ENCODE measurements at regions of chr5 and their contacts with region 1.

Region 1: DNA sequence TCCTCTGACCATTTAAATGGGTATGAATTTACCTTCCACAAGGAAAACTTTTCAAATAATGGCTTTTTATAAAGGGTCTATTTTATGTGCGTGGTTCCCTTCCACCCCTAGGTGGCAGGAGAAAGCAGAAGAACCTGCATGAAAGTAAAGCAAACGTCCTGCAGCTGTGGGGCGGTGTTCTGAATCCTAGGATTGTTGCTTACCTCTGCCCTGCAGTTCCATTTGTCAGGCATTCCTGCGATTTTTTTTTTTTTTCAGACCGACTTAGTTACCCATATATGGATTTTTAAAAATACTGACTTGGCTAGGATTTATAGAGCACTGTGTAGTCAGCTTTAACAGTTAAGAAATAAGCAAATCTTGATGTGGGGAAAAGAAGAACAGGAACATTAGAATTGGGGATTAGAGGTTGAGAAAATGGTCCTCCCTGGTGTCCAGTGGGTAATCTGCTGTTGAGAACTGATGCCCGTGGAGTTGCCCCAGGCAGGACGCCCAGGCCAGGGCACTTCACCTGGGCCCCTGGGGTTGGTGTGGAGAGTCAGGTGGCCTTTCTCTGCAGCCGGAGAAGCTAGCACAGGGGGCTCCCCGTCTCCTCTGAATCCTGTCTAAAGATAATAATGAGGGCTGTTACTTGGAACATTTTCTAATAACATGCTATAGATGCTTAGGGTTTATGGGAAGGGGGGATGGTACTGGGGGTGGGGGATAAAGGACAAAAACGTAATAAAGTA is 30.4 kb upstream of the LTC4S start:
- DNase-seq: peak; percentile 38
- ATAC-seq: peak; percentile 88
- H3K4me3 ChIP-seq: no peak overlapping the region
- H3K27ac ChIP-seq: peak overlapping the region; percentile 50
- H3K4me1 ChIP-seq: peaks cover 11 to 47% of the 10 kb centered on the region in 2 experiments
- H3K27me3 ChIP-seq: no peaks in the 10 kb centered on the region
- CTCF ChIP-seq: peak; percentile 83 to 97 (median 90)
- POLR2A ChIP-seq: no peak
- RAD21 ChIP-seq: peak; percentile 83

Region 2: DNA sequence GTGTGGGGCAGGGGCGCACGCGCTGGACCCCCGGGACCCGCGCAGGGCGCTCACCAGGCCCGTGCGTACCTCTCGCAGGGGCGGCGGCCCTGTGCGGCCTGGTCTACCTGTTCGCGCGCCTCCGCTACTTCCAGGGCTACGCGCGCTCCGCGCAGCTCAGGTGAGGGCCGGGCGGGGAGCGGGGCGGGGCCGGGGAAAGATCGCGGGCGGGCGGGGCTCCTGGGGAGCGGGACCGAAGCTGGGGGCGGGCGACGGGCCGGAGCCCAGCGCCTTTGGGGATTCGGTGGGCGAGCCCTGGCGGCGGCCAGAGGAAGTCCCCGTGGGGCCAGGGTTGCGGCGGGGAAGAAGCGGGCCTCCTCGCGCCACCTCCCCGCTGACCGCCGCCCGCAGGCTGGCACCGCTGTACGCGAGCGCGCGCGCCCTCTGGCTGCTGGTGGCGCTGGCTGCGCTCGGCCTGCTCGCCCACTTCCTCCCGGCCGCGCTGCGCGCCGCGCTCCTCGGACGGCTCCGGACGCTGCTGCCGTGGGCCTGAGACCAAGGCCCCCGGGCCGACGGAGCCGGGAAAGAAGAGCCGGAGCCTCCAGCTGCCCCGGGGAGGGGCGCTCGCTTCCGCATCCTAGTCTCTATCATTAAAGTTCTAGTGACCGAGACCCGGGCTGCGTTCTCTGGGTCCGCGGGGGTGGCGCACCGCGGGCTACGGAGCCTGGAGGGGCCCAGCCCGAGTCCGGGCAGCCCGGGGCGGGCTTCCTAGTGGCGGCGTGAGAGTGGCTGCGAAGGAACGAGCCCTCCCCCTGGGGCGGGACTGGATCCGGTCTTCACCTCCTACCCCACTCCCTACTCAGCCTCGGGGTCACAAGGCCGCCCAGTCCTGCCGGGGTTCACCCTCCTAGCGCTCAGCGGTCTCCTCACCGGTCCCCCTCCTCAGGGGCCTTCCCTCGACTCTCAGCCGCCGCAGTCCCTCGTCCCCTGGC is 32.8 kb after region 1 on chr5:
- CTCF ChIA-PET with region 1: no interaction called
- POLR2A ChIA-PET with region 1: no interaction called
- RAD21 ChIA-PET with region 1: no interaction called
- intact Hi-C with region 1: loop called (anchors 2 kb)
- DNase-seq: no peak
- ATAC-seq: peak; percentile 78
- H3K4me3 ChIP-seq: peak overlapping the region; percentile 65 to 84
- H3K27ac ChIP-seq: peak overlapping the region; percentile 99
- H3K4me1 ChIP-seq: peaks cover 9 to 22% of the 10 kb centered on the region in 2 experiments; a peak in 3 of 4 replicates
- H3K27me3 ChIP-seq: no peaks in the 10 kb centered on the region
- CTCF ChIP-seq: peak in 2 of 3 experiments; percentile 51 to 53; a peak in 4 of 6 replicates
- POLR2A ChIP-seq: peak; percentile 76
- RAD21 ChIP-seq: no peak

Region 3: DNA sequence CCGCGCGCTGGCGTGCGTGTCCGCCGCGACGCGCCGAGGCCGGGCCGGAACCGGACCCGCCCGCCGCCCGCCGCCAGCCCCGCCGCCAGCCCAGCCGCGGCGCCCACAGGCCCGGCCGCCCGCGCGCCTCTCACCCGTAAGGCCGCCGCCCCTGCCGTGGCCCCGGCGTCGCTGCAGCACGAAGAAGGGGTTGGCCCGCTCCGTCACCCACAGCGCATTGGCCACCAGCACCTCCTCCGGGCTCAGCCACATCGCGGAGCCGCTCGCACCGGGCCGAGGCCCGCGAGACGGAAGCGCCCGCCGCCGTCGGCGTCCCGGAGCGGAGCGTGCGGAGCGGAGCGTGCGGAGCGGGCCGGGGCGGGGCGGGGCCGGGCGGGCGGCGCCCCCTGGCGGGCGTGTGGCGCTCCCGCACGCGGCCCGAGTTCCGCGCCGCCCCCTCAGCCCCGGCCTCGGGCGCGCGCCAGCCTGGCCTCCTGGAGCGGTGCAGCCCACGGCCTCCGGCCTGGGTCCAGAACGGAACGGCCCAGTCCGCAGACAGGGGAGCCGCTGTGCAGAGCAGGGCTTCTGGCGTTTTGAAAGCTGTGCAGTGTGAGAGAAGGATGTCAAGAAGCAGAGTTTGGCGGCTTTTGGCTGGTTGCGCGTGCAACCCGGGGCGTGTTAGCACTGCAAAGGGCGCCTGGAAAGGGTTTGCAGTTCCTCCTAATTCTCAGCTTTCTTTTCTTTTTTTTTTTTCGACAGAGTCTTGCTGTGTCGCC is 144.4 kb after region 1 on chr5 and contains the start of gene TBC1D9B:
- CTCF ChIA-PET with region 1: no interaction called
- POLR2A ChIA-PET with region 1: no interaction called
- RAD21 ChIA-PET with region 1: no interaction called
- intact Hi-C with region 1: loop called (anchors 2 kb)
- DNase-seq: no peak
- ATAC-seq: peak; percentile 91
- H3K4me3 ChIP-seq: peak within 1 kb of the TSS; percentile 70 to 90
- H3K27ac ChIP-seq: peak within 1 kb of the TSS; percentile 77
- H3K4me1 ChIP-seq: peaks cover 6 to 18% of the 10 kb centered on the region in 2 experiments; a peak in 3 of 4 replicates
- H3K27me3 ChIP-seq: no peaks in the 10 kb centered on the region
- CTCF ChIP-seq: peak in 1 of 3 experiments; percentile 7; a peak in 1 of 6 replicates
- POLR2A ChIP-seq: peak; percentile 81
- RAD21 ChIP-seq: no peak
- total RNA-seq, gene TBC1D9B: 127 TPM

Region 4: DNA sequence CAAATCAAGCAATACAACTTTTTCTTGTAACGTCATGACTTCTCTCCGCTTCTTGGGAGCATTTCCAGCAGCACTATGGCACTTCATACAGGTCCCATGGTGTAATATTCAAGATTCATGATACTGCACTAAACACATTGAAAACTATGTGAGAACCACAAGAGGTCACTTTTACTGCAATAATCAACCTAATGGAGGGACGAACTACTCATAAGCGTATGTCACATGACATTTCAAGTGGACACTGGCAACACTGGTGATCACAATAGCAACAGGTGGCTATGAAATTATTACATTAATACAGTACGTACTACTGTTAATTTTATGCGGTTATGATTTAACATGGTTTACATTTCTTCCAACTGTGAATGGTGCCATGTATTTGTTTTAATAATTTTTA is 222.9 kb after region 1 on chr5:
- CTCF ChIA-PET with region 1: no interaction called
- POLR2A ChIA-PET with region 1: no interaction called
- RAD21 ChIA-PET with region 1: no interaction called
- intact Hi-C with region 1: loop called (anchors 10 kb)
- DNase-seq: no peak
- ATAC-seq: no peak
- H3K4me3 ChIP-seq: no peak overlapping the region
- H3K27ac ChIP-seq: no peak overlapping the region
- H3K4me1 ChIP-seq: no peaks in the 10 kb centered on the region
- H3K27me3 ChIP-seq: no peaks in the 10 kb centered on the region
- CTCF ChIP-seq: no peak
- POLR2A ChIP-seq: no peak
- RAD21 ChIP-seq: peak; percentile 31; the same call in 1 of the 2 replicates

Region 5: DNA sequence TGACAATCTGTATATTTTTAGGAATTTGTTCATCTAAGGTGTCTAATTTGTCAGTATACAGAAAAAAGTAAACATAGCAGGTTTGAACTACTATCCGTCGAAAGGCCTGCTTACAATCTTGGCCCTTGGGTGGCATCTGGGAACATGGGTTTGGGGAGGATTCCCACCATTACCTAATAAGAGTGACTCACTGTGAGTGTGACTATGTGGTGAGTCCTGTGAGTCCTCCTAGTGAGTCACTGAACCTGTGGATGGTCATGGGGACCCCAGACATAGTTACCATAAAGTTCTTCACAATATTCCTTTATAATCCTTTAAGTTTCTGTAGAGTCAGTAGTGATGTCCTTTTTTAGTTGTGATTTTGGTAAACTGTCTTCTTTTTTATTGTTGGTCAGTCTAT is 271.2 kb after region 1 on chr5:
- CTCF ChIA-PET with region 1: no interaction called
- POLR2A ChIA-PET with region 1: no interaction called
- RAD21 ChIA-PET with region 1: no interaction called
- intact Hi-C with region 1: no loop called
- DNase-seq: no peak
- ATAC-seq: no peak
- H3K4me3 ChIP-seq: no peak overlapping the region
- H3K27ac ChIP-seq: no peak overlapping the region
- H3K4me1 ChIP-seq: no peaks in the 10 kb centered on the region
- H3K27me3 ChIP-seq: no peaks in the 10 kb centered on the region
- CTCF ChIP-seq: no peak
- POLR2A ChIP-seq: no peak
- RAD21 ChIP-seq: no peak

Region 6: DNA sequence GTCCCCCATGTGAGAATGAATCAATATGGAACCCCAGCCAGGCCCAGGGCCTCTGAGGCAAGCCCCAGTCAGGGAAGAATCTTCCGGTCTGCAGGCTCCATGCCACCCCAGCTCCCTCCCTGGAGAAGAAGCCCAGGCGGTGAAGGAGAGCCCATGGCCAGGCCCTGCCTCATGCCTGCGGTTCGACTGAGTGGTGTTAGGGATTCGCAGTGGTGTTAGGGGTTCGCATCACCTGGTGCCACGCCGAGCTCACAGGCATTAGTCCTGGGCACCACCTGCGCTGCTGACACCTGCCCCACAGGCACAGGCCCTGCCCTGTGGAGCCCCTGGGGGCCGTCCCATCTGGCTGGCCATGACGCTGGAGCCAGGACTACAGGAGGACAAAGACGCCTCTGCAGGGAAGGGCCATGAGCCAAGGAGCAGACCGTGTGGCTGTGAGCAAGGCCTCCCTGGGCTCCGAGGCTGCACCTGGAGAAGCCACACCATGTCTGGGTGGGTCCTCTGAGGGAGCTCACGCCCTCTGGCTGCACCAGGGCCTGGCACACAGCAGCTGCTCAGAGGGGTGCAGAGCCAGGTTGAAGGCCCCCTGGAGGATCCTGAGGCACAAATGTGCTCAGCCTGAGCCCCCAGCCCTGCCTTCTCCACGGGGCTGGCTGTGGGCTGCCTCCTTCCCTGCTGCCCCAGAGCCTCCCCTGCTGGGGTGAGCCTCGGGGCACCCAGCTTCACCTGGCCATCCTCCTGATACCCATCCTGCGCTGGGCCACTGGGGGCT is 335.8 kb after region 1 on chr5:
- CTCF ChIA-PET with region 1: no interaction called
- POLR2A ChIA-PET with region 1: no interaction called
- RAD21 ChIA-PET with region 1: no interaction called
- intact Hi-C with region 1: no loop called
- DNase-seq: no peak
- ATAC-seq: no peak; the same call in 1 of the 2 replicates
- H3K4me3 ChIP-seq: no peak overlapping the region
- H3K27ac ChIP-seq: no peak overlapping the region
- H3K4me1 ChIP-seq: no peaks in the 10 kb centered on the region
- H3K27me3 ChIP-seq: no peaks in the 10 kb centered on the region
- CTCF ChIP-seq: no peak
- POLR2A ChIP-seq: no peak
- RAD21 ChIP-seq: no peak

Measured in HCT116 (cell line).